T-cell (primary cell): ENCODE measurements at regions of chr19 and their contacts with region 1.

Region 1: GRCh38 chr19:16247353-16248182 is 49.9 kb downstream of the AP1M1 start:
- DNase-seq: peak; percentile 37 to 89 (median 76)
- ATAC-seq: peak; percentile 73 to 90 (median 81)
- H3K4me3 ChIP-seq: peak overlapping the region in 1 of 2 donors; percentile 15
- H3K4me3 Mint-ChIP-seq: peak overlapping the region in 2 of 3 donors; percentile 17 to 51
- H3K27ac ChIP-seq: no peak overlapping the region
- H3K27ac Mint-ChIP-seq: peak overlapping the region; percentile 35 to 83
- H3K4me1 ChIP-seq: peaks cover 22 to 34% of the 10 kb centered on the region in 2 experiments
- H3K4me1 Mint-ChIP-seq: peaks cover 20 to 41% (median 21%) of the 10 kb centered on the region in 3 donors
- H3K27me3 ChIP-seq: no peaks in the 10 kb centered on the region
- H3K27me3 Mint-ChIP-seq: no peaks in the 10 kb centered on the region

Region 2: GRCh38 chr19:16175954-16176353 is 71.6 kb before region 1 on chr19:
- CTCF ChIA-PET with region 1: no interaction called
- POLR2A ChIA-PET with region 1: no interaction called
- DNase-seq: no peak
- ATAC-seq: no peak
- H3K4me3 ChIP-seq: no peak overlapping the region
- H3K4me3 Mint-ChIP-seq: no peak overlapping the region
- H3K27ac ChIP-seq: no peak overlapping the region
- H3K27ac Mint-ChIP-seq: no peak overlapping the region
- H3K4me1 ChIP-seq: peaks cover 0 to 3% of the 10 kb centered on the region in 2 experiments
- H3K4me1 Mint-ChIP-seq: peaks cover 0 to 7% (median 0%) of the 10 kb centered on the region in 3 donors
- H3K27me3 ChIP-seq: peaks cover 0 to 2% of the 10 kb centered on the region in 2 experiments
- H3K27me3 Mint-ChIP-seq: no peaks in the 10 kb centered on the region

Region 3: GRCh38 chr19:16202320-16203255 is 45.0 kb before region 1 on chr19:
- CTCF ChIA-PET with region 1: no interaction called
- POLR2A ChIA-PET with region 1: no interaction called
- DNase-seq: no peak
- ATAC-seq: no peak
- H3K4me3 ChIP-seq: no peak overlapping the region
- H3K4me3 Mint-ChIP-seq: no peak overlapping the region
- H3K27ac ChIP-seq: no peak overlapping the region
- H3K27ac Mint-ChIP-seq: peak overlapping the region in 1 of 2 donors; percentile 31
- H3K4me1 ChIP-seq: peaks cover 20 to 49% of the 10 kb centered on the region in 2 experiments
- H3K4me1 Mint-ChIP-seq: peaks cover 50 to 57% (median 53%) of the 10 kb centered on the region in 3 donors
- H3K27me3 ChIP-seq: no peaks in the 10 kb centered on the region
- H3K27me3 Mint-ChIP-seq: no peaks in the 10 kb centered on the region

Region 4: DNA sequence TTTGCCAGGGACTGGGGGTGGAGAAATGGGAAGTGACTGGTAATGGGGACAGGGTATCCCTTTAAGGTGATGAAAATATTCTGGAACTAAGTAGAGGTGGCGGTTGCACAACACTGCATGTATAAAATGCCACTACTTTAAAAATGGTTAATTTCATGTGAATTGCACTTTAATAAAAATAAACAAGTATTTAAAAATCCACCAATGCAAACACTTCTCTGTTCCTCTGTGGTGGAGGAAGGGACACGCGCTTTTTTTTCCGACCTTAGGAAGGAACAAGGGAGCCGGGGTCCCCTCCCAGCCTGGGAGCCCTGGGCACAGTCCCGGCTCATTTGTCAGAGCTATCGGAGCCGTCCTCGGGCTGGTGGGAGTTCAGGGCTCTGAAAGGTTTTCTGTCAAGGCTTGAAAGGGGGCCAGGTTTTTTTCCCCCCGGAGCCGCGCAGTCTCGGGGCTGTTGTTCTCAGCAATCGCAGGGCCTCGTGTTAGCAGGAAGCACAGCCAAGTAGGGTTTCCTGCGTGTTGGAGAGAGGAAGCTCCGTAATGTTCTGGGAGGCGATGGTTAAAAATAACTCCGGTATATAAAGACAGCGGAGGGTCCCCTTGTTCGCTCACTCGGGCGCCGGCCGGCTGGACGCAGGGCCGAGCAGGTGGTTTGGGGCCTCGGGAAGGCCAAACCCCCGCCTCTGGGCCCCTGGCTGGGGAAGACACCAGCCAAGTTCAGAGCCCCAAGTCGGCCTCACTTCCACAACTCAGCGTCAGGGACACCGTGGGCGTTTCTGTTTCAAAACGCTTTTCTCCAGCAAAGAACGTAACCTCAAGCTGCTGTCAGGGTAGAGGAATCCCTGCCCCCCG is 35.9 kb after region 1 on chr19:
- CTCF ChIA-PET with region 1: interaction called in 1 of 2 experiments, 10 read pairs
- POLR2A ChIA-PET with region 1: no interaction called
- DNase-seq: peak; percentile 30 to 76 (median 56)
- ATAC-seq: peak; percentile 71 to 84 (median 82)
- H3K4me3 ChIP-seq: peak overlapping the region; percentile 38 to 66
- H3K4me3 Mint-ChIP-seq: peak overlapping the region; percentile 64 to 78 (median 65)
- H3K27ac ChIP-seq: peak overlapping the region; percentile 68
- H3K27ac Mint-ChIP-seq: peak overlapping the region; percentile 90
- H3K4me1 ChIP-seq: peaks cover 8 to 35% of the 10 kb centered on the region in 2 experiments
- H3K4me1 Mint-ChIP-seq: peaks cover 33 to 55% (median 47%) of the 10 kb centered on the region in 3 donors
- H3K27me3 ChIP-seq: peaks cover 0 to 20% of the 10 kb centered on the region in 2 experiments
- H3K27me3 Mint-ChIP-seq: peaks cover 5% of the 10 kb centered on the region in 2 donors

Region 5: GRCh38 chr19:16389848-16390247 is 142.3 kb after region 1 on chr19:
- CTCF ChIA-PET with region 1: interaction called, 11 to 26 read pairs
- POLR2A ChIA-PET with region 1: interaction called in 1 of 2 experiments, 10 read pairs
- DNase-seq: no peak
- ATAC-seq: no peak
- H3K4me3 ChIP-seq: no peak overlapping the region
- H3K4me3 Mint-ChIP-seq: no peak overlapping the region
- H3K27ac ChIP-seq: no peak overlapping the region
- H3K27ac Mint-ChIP-seq: peak overlapping the region in 1 of 2 donors; percentile 16
- H3K4me1 ChIP-seq: peaks cover 3 to 12% of the 10 kb centered on the region in 2 experiments
- H3K4me1 Mint-ChIP-seq: peaks cover 15 to 21% (median 19%) of the 10 kb centered on the region in 3 donors
- H3K27me3 ChIP-seq: no peaks in the 10 kb centered on the region
- H3K27me3 Mint-ChIP-seq: no peaks in the 10 kb centered on the region